CD4-positive, alpha-beta memory T cell (primary cell): ENCODE measurements at regions of chr14 and their contacts with region 1.

Region 1: DNA sequence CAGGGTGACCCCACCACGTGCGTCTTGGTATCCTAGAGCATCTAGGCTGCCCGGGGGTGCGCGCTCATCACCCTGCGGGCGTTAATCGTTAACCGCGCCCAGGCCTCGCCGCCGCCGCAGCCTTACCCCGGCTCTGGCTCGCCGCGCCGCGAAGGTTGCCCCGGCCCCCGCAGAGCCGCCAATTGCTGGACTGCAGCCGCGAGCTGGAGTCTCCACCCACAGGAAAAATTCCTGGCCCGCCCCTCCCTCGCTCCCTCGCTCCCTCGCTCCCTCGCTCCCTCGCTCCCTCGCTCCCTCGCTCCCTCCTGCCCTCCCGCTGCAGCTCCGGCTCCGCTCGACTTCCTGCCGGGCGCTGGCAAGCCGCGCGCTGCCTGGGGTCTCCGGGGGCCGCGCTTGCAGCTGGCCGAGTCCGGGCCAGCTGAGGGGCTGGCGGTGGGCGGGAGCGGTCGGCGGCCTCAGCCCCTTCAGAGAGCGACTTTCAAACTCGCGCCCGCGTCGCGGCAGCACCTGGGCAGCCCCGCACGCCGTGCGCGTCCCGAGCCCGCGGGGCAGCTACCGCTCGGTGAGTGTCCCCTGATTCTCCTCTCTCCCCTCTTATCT is at the start of gene PLEKHG3:
- DNase-seq: peak in 4 of 5 donors; percentile 35 to 76 (median 42)
- H3K4me3 ChIP-seq: peak within 1 kb of the TSS; percentile 57 to 74
- H3K4me3 Mint-ChIP-seq: peak within 1 kb of the TSS; percentile 90 to 95 (median 94)
- H3K27ac ChIP-seq: peak within 1 kb of the TSS; percentile 80
- H3K27ac Mint-ChIP-seq: peak within 1 kb of the TSS; percentile 86 to 98 (median 93)
- H3K4me1 ChIP-seq: peaks cover 80% of the 10 kb centered on the region
- H3K4me1 Mint-ChIP-seq: peaks cover 42 to 83% (median 58%) of the 10 kb centered on the region in 4 donors
- H3K27me3 ChIP-seq: no peaks in the 10 kb centered on the region
- H3K27me3 Mint-ChIP-seq: no peaks in the 10 kb centered on the region
- total RNA-seq, gene PLEKHG3: 53.3 to 56.5 TPM

Region 2: DNA sequence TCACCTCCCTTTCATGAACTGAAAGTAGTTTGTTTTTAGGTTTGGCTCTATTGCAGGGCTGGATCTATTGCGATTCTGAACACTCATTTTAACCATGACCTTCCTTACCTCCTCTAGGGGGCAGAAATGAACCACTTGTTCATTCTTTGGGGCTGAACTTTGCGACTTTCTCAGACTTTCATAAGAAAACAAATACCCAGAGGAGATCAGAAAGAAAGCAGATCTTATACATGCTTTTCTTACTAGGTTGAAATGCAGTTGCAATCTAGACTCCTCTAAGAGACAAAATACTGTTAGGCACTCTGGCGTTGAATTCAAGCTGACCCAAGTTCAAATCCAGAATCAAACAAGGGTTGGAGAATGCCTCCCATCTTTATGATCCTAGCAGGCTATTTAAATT is 32.7 kb before region 1 on chr14:
- CTCF ChIA-PET with region 1: interaction called, 62 read pairs
- POLR2A ChIA-PET with region 1: interaction called, 59 read pairs
- intact Hi-C with region 1: loop called (anchors 2 kb)
- DNase-seq: peak; percentile 44 to 77 (median 71)
- H3K4me3 ChIP-seq: no peak overlapping the region
- H3K4me3 Mint-ChIP-seq: no peak overlapping the region
- H3K27ac ChIP-seq: no peak overlapping the region
- H3K27ac Mint-ChIP-seq: peak overlapping the region in 6 of 7 donors; percentile 11 to 79 (median 64)
- H3K4me1 ChIP-seq: peaks cover 37% of the 10 kb centered on the region
- H3K4me1 Mint-ChIP-seq: peaks cover 30 to 38% (median 33%) of the 10 kb centered on the region in 4 donors
- H3K27me3 ChIP-seq: no peaks in the 10 kb centered on the region
- H3K27me3 Mint-ChIP-seq: no peaks in the 10 kb centered on the region

Region 3: GRCh38 chr14:64688811-64689281 is 15.4 kb before region 1 on chr14:
- CTCF ChIA-PET with region 1: interaction called, 9 read pairs
- POLR2A ChIA-PET with region 1: interaction called, 178 read pairs
- intact Hi-C with region 1: loop called (anchors 2 kb)
- DNase-seq: peak in 1 of 5 donors; percentile 48
- H3K4me3 ChIP-seq: no peak overlapping the region
- H3K4me3 Mint-ChIP-seq: peak overlapping the region in 7 of 8 donors; percentile 52 to 77 (median 71)
- H3K27ac ChIP-seq: no peak overlapping the region
- H3K27ac Mint-ChIP-seq: peak overlapping the region in 6 of 7 donors; percentile 49 to 87 (median 70)
- H3K4me1 ChIP-seq: peaks cover 29% of the 10 kb centered on the region
- H3K4me1 Mint-ChIP-seq: peaks cover 31 to 64% (median 44%) of the 10 kb centered on the region in 4 donors
- H3K27me3 ChIP-seq: no peaks in the 10 kb centered on the region
- H3K27me3 Mint-ChIP-seq: no peaks in the 10 kb centered on the region

Region 4: DNA sequence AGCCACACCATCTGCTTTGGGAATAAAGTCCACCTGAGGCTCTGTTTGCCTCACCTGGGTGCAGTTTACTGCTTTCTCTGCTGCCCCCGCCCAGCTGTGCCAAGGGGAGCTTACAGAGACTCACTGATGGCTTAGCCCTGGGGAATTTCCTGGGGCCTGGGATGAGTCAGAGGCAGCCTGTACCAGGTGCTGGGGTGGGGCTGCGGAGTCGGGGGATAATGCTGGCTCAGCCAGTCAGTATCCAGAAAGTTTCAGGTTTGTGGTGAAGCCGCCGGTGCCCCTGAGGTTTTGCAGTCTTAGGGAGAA is 22.3 kb after region 1 on chr14:
- CTCF ChIA-PET with region 1: interaction called, 67 read pairs
- POLR2A ChIA-PET with region 1: interaction called, 469 read pairs
- intact Hi-C with region 1: loop called (anchors 1 kb)
- DNase-seq: peak in 2 of 5 donors; percentile 39 to 88
- H3K4me3 ChIP-seq: no peak overlapping the region
- H3K4me3 Mint-ChIP-seq: peak overlapping the region in 7 of 8 donors; percentile 26 to 84 (median 62)
- H3K27ac ChIP-seq: peak overlapping the region; percentile 55
- H3K27ac Mint-ChIP-seq: peak overlapping the region; percentile 65 to 97 (median 92)
- H3K4me1 ChIP-seq: peaks cover 96% of the 10 kb centered on the region
- H3K4me1 Mint-ChIP-seq: peaks cover 78 to 100% (median 88%) of the 10 kb centered on the region in 4 donors
- H3K27me3 ChIP-seq: no peaks in the 10 kb centered on the region
- H3K27me3 Mint-ChIP-seq: no peaks in the 10 kb centered on the region